ENCODE measurements at regions of chr7 and their contacts with region 1.

Region 1: GRCh38 chr7:152336754-152337368 is 98.9 kb downstream of the KMT2C start:
- DNase-seq: peak in 1 of 2 donors; percentile 14
- ATAC-seq: peak in 7 of 8 donors; percentile 59 to 79 (median 69)
- H3K4me3 ChIP-seq: peak overlapping the region in 1 of 10 donors; percentile 24
- H3K27ac ChIP-seq: peak overlapping the region in 2 of 10 donors; percentile 13 to 40
- H3K4me1 ChIP-seq: peaks cover 5 to 70% (median 43%) of the 10 kb centered on the region in 9 donors
- H3K27me3 ChIP-seq: no peaks in the 10 kb centered on the region
- CTCF ChIP-seq: peak in 8 of 9 donors; percentile 27 to 64 (median 46)

Region 2: DNA sequence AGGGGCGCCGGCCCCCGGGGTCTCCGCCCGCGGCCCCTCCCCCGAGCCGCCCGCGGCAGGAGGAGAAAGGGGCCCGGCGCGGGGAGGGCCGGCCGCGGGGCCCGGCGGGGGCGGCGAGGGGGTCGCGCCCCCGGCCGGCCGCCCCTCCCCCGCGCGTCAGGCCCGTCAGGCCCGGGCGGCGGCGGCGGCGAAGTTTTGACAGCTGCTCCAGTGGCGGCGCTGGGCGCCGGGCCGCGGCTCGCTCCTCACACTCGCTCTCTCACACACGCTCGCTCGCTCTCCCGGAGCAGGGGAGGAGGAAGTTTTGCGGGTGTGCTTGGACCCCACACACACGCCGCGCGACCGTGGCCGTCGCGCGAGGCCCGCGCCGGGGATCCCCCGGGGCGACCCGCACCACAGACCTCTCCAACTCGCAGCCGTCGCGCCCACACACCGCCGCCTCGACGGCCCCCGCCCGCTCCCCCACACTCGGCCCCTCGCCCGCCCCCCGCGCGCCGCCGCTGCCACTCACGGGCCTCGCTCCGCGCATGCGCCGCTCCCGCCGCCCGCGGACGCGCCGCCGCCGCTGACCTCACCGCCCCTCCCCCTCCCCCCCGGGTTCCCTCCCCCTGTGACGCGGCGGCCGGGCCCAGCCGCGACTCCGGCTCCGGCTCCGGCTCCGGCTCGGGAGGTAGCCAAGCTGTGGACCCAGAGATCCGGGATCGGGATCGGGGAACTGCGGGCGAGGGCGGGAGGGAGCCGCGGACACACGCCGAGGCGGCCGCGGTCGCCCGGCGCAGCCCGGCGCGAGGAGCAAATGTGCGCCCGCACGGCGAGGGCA is 99.5 kb after region 1 on chr7:
- intact Hi-C with region 1: loop called in 4 of 10 experiments (anchors 10 kb)
- DNase-seq: peak; percentile 94 to 96
- ATAC-seq: peak; percentile 87 to 94 (median 88)
- H3K4me3 ChIP-seq: peak overlapping the region; percentile 41 to 99 (median 78)
- H3K27ac ChIP-seq: peak overlapping the region; percentile 93 to 100 (median 98)
- H3K4me1 ChIP-seq: peaks cover 0 to 33% (median 28%) of the 10 kb centered on the region in 9 donors
- H3K27me3 ChIP-seq: no peaks in the 10 kb centered on the region
- CTCF ChIP-seq: no peak

Region 3: GRCh38 chr7:152709287-152710152 is 372.7 kb after region 1 on chr7:
- intact Hi-C with region 1: loop called in 7 of 10 experiments (anchors 2 to 10 kb)
- DNase-seq: no peak
- ATAC-seq: no peak
- H3K4me3 ChIP-seq: no peak overlapping the region
- H3K27ac ChIP-seq: no peak overlapping the region
- H3K4me1 ChIP-seq: peaks cover 0 to 4% (median 0%) of the 10 kb centered on the region in 9 donors
- H3K27me3 ChIP-seq: no peaks in the 10 kb centered on the region
- CTCF ChIP-seq: no peak

Measured in heart right ventricle (tissue), 16 donors.